Left lung (tissue), 14 donors: ENCODE measurements at regions of chr15 and their contacts with region 1.

Region 1: GRCh38 chr15:65032801-65033537 is 3.5 kb upstream of the MTFMT start:
- DNase-seq: peak in 3 of 4 donors; percentile 56 to 77 (median 74)
- ATAC-seq: peak; percentile 83
- H3K4me3 ChIP-seq: no peak overlapping the region
- H3K27ac ChIP-seq: no peak overlapping the region
- H3K4me1 ChIP-seq: peaks cover 7 to 23% of the 10 kb centered on the region in 2 donors
- H3K27me3 ChIP-seq: no peaks in the 10 kb centered on the region
- CTCF ChIP-seq: peak; percentile 28 to 68

Region 2: DNA sequence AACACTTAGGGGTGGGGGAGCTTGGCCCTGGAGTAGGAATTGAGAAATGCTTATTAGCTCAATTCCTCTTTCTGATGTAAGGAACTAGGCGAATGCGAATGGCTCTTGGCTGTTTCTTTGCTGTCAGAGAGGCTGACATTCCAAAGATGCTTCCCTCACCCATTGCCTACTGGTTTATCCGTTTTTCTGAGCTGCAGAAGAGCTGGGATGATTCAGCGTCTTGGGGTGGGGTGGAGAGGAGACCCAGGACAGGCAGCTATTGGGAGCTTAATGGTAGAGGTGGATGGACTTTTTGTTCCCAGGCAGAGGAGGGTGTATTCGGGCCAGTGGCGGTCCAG is 181.5 kb before region 1 on chr15:
- intact Hi-C with region 1: no loop called
- DNase-seq: peak in 3 of 4 donors; percentile 28 to 78 (median 71)
- ATAC-seq: peak; percentile 55
- H3K4me3 ChIP-seq: peak overlapping the region in 1 of 2 donors; percentile 10
- H3K27ac ChIP-seq: peak overlapping the region; percentile 70 to 71
- H3K4me1 ChIP-seq: peaks cover 48 to 100% of the 10 kb centered on the region in 2 donors
- H3K27me3 ChIP-seq: no peaks in the 10 kb centered on the region
- CTCF ChIP-seq: no peak

Region 3: GRCh38 chr15:65094294-65094995 is 61.5 kb after region 1 on chr15:
- intact Hi-C with region 1: loop called in 1 of 2 experiments (anchors 10 kb)
- DNase-seq: no peak
- ATAC-seq: peak; percentile 67
- H3K4me3 ChIP-seq: no peak overlapping the region
- H3K27ac ChIP-seq: no peak overlapping the region
- H3K4me1 ChIP-seq: no peaks in the 10 kb centered on the region
- H3K27me3 ChIP-seq: no peaks in the 10 kb centered on the region
- CTCF ChIP-seq: no peak